Prostate gland (tissue), 2 donors: ENCODE measurements at regions of chr11 and their contacts with region 1.

Region 1: DNA sequence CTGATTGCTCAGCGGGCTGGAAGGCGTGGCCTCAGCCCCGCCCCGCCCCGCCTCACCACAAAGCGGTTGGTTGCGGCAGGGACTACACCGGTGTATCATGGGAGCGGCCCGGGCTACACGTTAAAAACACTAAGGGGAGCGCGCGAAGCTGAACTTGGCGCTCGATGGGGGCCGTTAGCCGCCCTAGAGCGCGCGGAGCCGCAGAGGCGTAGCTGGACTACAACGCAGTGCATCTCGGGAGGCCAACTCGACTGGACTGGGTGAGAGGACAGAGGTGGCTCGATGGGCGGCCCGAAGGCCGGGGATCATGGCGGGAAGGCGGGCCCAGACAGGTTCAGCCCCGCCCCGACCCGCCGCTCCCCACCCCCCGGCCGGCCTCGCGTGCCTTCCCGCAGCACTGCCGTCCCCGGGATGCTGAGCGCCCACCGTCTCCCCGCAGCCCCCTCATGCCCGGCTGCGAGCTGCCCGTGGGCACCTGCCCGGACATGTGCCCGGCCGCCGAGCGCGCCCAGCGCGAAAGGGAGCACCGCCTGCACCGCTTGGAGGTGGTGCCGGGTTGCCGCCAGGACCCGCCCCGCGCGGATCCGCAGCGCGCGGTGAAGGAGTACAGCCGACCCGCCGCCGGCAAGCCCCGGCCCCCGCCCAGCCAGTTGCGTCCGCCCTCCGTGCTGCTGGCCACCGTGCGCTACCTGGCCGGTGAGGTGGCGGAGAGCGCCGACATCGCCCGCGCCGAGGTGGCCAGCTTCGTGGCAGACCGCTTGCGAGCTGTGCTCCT is at the start of gene SAC3D1:
- DNase-seq: peak; percentile 86
- H3K4me3 ChIP-seq: peak within 1 kb of the TSS; percentile 80 to 82
- H3K27ac ChIP-seq: peak within 1 kb of the TSS; percentile 88 to 95
- H3K4me1 ChIP-seq: peaks cover 5% of the 10 kb centered on the region
- H3K27me3 ChIP-seq: no peaks in the 10 kb centered on the region
- CTCF ChIP-seq: peak in 1 of 4 experiments; percentile 6
- POLR2A ChIP-seq: peak; percentile 49
- total RNA-seq, gene SAC3D1: 25.0 to 29.4 TPM

Region 2: GRCh38 chr11:65083834-65084597 is 43.0 kb after region 1 on chr11 and contains the starts of genes CDCA5 and ZFPL1:
- intact Hi-C with region 1: loop called (anchors 5 kb)
- DNase-seq: peak; percentile 93
- H3K4me3 ChIP-seq: peak within 1 kb of the TSS; percentile 77 to 78
- H3K27ac ChIP-seq: peak within 1 kb of the TSS; percentile 91 to 94
- H3K4me1 ChIP-seq: peaks cover 5% of the 10 kb centered on the region
- H3K27me3 ChIP-seq: no peaks in the 10 kb centered on the region
- CTCF ChIP-seq: peak in 2 of 4 experiments; percentile 29 to 30
- POLR2A ChIP-seq: peak; percentile 57
- total RNA-seq, gene CDCA5: 2.3 to 17.8 TPM
- total RNA-seq, gene ZFPL1: 61.6 to 62.6 TPM

Region 3: GRCh38 chr11:65329944-65330403 is 288.9 kb after region 1 on chr11:
- intact Hi-C with region 1: no loop called
- DNase-seq: peak; percentile 95
- H3K4me3 ChIP-seq: no peak overlapping the region
- H3K27ac ChIP-seq: peak overlapping the region; percentile 27 to 63
- H3K4me1 ChIP-seq: no peaks in the 10 kb centered on the region
- H3K27me3 ChIP-seq: no peaks in the 10 kb centered on the region
- CTCF ChIP-seq: peak; percentile 79 to 93 (median 88)
- POLR2A ChIP-seq: no peak